Activated naive CD4-positive, alpha-beta T cell treated with anti-CD3 and anti-CD28 coated beads for 36 hours (primary cell): ENCODE measurements at regions of chrX and their contacts with region 1.

Region 1: GRCh38 chrX:68196939-68197791 is 236.1 kb downstream of the OPHN1 start:
- DNase-seq: peak; percentile 43
- H3K4me3 Mint-ChIP-seq: no peak overlapping the region
- H3K27ac Mint-ChIP-seq: no peak overlapping the region
- H3K4me1 Mint-ChIP-seq: no peaks in the 10 kb centered on the region
- H3K27me3 Mint-ChIP-seq: no peaks in the 10 kb centered on the region

Region 2: DNA sequence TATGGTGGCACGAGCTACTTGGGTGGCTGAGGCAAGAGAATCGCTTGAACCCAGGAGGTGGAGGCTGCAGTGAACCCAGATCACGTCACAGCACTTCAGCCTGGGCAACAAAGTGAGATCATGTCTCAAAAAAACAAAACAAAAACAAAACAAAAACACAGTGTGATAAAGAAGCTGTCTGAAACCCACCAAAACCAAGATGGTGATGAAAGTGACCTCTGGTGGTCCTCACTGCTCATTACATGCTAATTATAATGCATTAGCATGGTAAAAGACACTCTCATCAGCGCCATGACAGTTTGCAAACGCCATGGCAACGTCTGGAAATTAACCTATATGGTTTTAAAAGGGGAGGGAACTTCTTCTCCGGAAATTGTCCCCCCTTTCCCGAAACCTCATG is 265.5 kb after region 1 on chrX:
- CTCF ChIA-PET with region 1: interaction called, 4 read pairs
- intact Hi-C with region 1: loop called (anchors 5 kb)
- DNase-seq: peak; percentile 16
- H3K4me3 Mint-ChIP-seq: no peak overlapping the region
- H3K27ac Mint-ChIP-seq: no peak overlapping the region
- H3K4me1 Mint-ChIP-seq: no peaks in the 10 kb centered on the region
- H3K27me3 Mint-ChIP-seq: no peaks in the 10 kb centered on the region

Region 3: DNA sequence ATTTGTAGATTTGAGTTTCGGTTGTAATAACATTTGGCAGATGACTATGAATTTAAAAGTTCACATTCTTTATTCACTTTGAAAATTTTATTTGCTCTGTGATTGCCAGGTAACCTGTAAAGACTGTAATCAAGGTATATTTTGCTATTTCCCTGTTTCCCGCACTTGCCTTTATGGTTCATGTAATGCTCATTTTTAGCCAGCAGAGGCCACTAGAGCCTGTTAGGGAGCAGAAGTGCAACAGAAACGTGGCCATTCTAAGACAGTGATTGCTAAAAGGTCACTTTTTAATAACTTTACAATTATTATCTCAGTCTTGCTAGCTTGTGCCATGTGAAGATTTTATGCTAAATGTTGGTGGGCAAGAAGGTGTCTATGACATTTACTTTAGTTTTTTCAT is 314.1 kb after region 1 on chrX:
- CTCF ChIA-PET with region 1: no interaction called
- intact Hi-C with region 1: loop called (anchors 5 kb)
- DNase-seq: peak; percentile 43
- H3K4me3 Mint-ChIP-seq: no peak overlapping the region
- H3K27ac Mint-ChIP-seq: no peak overlapping the region
- H3K4me1 Mint-ChIP-seq: peaks cover 22% of the 10 kb centered on the region
- H3K27me3 Mint-ChIP-seq: no peaks in the 10 kb centered on the region

Region 4: GRCh38 chrX:68710870-68711576 is 513.9 kb after region 1 on chrX:
- CTCF ChIA-PET with region 1: interaction called, 14 read pairs
- intact Hi-C with region 1: loop called (anchors 1 kb)
- DNase-seq: peak; percentile 28
- H3K4me3 Mint-ChIP-seq: no peak overlapping the region
- H3K27ac Mint-ChIP-seq: no peak overlapping the region
- H3K4me1 Mint-ChIP-seq: no peaks in the 10 kb centered on the region
- H3K27me3 Mint-ChIP-seq: no peaks in the 10 kb centered on the region

Region 5: GRCh38 chrX:68807818-68808217 is 610.7 kb after region 1 on chrX:
- CTCF ChIA-PET with region 1: interaction called, 4 read pairs
- intact Hi-C with region 1: loop called (anchors 1 kb)
- DNase-seq: peak; percentile 27
- H3K4me3 Mint-ChIP-seq: no peak overlapping the region
- H3K27ac Mint-ChIP-seq: no peak overlapping the region
- H3K4me1 Mint-ChIP-seq: no peaks in the 10 kb centered on the region
- H3K27me3 Mint-ChIP-seq: peaks cover 6% of the 10 kb centered on the region

Region 6: DNA sequence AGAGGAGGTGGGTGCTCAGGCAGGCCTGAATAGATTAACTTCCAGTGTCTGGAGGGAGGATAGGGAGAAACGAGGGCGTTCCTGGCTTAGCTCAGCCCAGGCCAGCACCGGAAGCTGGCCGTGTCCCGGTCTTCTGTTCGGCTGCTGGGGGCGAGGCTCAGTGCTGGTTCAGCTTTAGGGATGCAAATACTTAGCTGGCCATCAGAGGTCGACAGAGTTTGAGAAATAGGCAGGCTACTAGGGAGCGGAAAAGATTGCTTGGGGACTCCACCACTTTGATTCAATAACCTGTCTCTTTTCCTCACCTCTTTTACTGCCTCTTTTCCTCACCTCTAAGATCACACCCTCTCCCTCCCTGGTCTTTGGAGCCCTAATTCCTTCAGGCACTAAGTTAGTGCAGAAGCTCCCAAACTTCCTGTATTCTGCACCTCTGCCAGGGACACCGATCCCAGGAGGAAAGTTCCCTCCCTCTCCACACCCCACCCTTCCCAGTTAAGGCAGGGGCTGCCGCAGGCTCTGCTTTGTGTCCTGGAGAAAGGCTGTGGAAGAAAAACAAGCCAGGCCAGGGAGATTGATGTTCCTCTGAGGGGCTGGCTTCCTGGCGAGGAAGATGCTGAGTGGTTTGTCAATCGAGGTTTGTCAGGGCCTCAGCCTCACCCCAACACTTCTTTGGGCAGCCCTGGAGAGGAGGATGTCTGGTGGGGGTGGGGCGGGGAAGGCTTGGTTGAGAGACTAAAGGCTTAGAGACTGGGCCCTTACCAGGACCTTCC is 625.7 kb after region 1 on chrX:
- CTCF ChIA-PET with region 1: no interaction called
- intact Hi-C with region 1: loop called (anchors 5 kb)
- DNase-seq: peak; percentile 30
- H3K4me3 Mint-ChIP-seq: no peak overlapping the region
- H3K27ac Mint-ChIP-seq: no peak overlapping the region
- H3K4me1 Mint-ChIP-seq: peaks cover 5% of the 10 kb centered on the region
- H3K27me3 Mint-ChIP-seq: peaks cover 1% of the 10 kb centered on the region

Region 7: DNA sequence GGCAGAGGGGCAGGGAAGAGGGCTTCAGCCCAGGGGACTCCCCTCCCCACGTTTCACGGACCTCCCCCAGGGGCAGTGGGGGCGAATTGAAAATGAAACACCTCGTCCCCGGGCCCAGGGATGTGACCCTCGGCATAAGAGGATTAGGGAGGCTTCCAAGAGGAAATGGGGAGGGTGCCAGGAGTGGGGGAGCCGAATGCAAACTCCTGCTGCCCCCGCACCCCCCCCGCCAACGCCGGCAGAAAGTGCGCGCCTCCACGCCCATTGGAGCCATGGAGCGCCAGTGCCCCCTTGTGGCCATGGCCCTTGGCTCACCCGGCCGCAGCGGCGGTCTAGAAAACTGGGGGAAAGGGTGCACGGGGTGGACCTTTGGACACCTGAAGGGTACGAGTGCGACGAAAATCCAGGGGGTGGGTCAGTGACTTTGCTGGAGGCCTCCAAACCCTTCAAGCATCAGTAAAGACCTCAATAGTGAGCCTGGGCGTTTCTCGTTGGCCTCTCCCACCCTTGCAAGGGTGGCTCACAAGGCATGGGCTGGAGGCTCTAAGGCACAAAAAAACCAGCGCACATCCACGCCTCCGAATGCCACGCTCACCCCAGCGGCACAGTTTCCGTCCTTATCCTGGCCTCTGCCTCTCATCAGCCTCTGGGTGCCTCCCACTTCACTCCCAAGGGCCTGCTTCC is 1088.9 kb after region 1 on chrX:
- CTCF ChIA-PET with region 1: interaction called, 4 read pairs
- intact Hi-C with region 1: loop called (anchors 5 kb)
- DNase-seq: peak; percentile 60
- H3K4me3 Mint-ChIP-seq: no peak overlapping the region
- H3K27ac Mint-ChIP-seq: no peak overlapping the region
- H3K4me1 Mint-ChIP-seq: no peaks in the 10 kb centered on the region
- H3K27me3 Mint-ChIP-seq: no peaks in the 10 kb centered on the region